GM13976 (cell line): ENCODE measurements at regions of chr17 and their contacts with region 1.

Region 1: GRCh38 chr17:66549731-66550207 is 247.4 kb downstream of the PRKCA start:
- DNase-seq: no peak
- CTCF ChIP-seq: no peak

Region 2: DNA sequence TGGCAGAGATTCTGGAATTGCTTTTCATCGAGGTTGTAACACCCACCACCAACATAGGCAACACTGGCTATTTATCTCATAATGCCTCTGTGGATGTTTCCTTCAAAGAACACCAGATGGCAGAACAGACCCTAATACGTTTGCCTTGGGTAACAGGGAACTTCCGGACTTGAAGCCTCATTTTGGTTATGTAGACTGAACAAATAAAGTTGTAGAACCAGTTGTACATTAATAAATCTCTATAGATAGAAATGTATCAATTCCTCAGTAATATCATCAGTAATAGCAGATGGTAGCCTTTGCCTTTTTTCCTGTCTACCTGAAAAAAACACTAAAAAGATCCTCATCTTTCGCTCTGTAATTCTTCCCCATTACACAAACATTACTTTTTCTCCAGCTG is 294.7 kb before region 1 on chr17:
- in situ Hi-C with region 1: loop called (anchors 10 kb)
- DNase-seq: peak; percentile 52
- CTCF ChIP-seq: peak; percentile 36